ENCODE measurements at regions of chr12 and their contacts with region 1.

Region 1: DNA sequence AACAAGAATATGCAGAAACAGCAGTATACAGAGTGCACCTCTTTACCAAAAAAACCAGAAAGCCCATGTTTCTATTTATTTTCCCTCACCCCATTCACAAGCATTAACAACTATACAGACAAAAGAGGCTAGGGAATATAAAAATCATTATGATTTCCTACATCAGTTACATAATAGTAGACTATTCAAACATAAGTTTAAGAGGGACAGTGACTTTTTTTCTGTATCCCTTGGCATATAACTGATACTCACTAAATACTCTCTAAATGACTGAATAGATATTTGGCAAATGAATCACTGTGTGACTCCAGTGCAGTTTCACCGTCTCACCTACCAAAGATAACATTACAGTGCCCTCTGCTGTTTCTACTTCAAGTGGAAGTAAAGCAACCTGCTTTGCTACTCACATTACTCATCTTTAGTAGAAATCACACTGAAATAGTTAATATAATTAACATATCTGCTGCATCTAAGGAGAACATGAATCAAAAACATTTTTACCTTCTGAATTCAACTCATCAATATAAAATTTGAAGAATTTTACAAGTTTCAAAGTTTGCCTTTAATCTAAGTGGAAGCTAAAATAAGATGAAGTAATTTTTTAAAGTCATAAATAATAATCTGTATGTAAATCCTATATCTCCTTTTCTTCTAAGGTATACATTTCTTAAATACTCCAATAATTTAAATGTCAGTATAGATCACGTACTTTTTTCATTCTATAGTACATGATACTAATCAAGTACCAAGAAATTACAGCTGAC is 103.8 kb downstream of the OSBPL8 start:
- DNase-seq: peak; percentile 95
- ATAC-seq: peak; percentile 89
- H3K4me3 ChIP-seq: 0 out of 2 replicates have a peak overlapping the region, but pooled peaks have one; percentile 19
- H3K27ac ChIP-seq: peak overlapping the region; percentile 52
- H3K4me1 ChIP-seq: peaks cover 31% of the 10 kb centered on the region
- H3K27me3 ChIP-seq: no peaks in the 10 kb centered on the region
- CTCF ChIP-seq: peak; percentile 90

Region 2: GRCh38 chr12:75526655-75527511 is 928.9 kb before region 1 on chr12:
- CTCF ChIA-PET with region 1: no interaction called
- POLR2A ChIA-PET with region 1: no interaction called
- intact Hi-C with region 1: loop called (anchors 5 kb)
- DNase-seq: peak; percentile 75
- ATAC-seq: peak; percentile 76
- H3K4me3 ChIP-seq: no peak overlapping the region
- H3K27ac ChIP-seq: no peak overlapping the region
- H3K4me1 ChIP-seq: no peaks in the 10 kb centered on the region; the same call in 1 of the 2 replicates
- H3K27me3 ChIP-seq: no peaks in the 10 kb centered on the region
- CTCF ChIP-seq: peak; percentile 87

Region 3: GRCh38 chr12:76031537-76032073 is 424.2 kb before region 1 on chr12 and contains the start of gene PHLDA1:
- CTCF ChIA-PET with region 1: no interaction called
- POLR2A ChIA-PET with region 1: interaction called, 9 read pairs
- intact Hi-C with region 1: loop called (anchors 1 kb)
- DNase-seq: peak; percentile 98
- ATAC-seq: peak; percentile 75
- H3K4me3 ChIP-seq: peak within 1 kb of the TSS; percentile 97
- H3K27ac ChIP-seq: peak within 1 kb of the TSS; percentile 94
- H3K4me1 ChIP-seq: peaks cover 34% of the 10 kb centered on the region
- H3K27me3 ChIP-seq: no peaks in the 10 kb centered on the region
- CTCF ChIP-seq: peak; percentile 34; the same call in 1 of the 2 replicates
- total RNA-seq, gene PHLDA1: 181 and 218 TPM in 2 replicates

Region 4: DNA sequence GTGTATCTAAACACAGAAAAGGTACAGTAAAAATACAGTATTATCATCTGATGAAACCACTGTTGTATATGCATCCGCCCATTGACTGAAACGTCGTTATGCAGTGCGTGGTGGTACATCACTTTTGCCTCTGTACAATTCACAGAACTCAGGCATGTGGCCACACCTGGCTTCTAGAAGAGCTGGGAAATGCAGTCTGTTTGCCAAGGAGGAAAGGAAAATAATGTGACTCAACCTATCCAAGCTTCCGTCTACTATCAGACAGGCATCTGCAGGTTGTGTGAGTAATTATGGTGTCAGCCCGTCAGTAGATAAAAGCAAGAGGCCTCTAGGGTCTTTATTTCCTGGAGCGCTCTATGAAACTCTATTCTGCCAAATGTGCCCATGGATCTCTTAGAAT is 219.2 kb before region 1 on chr12:
- CTCF ChIA-PET with region 1: no interaction called
- POLR2A ChIA-PET with region 1: no interaction called
- intact Hi-C with region 1: loop called (anchors 5 kb)
- DNase-seq: peak; percentile 97
- ATAC-seq: peak; percentile 93
- H3K4me3 ChIP-seq: peak overlapping the region; percentile 21; the same call in 1 of the 2 replicates
- H3K27ac ChIP-seq: peak overlapping the region; percentile 86
- H3K4me1 ChIP-seq: peaks cover 35% of the 10 kb centered on the region
- H3K27me3 ChIP-seq: no peaks in the 10 kb centered on the region
- CTCF ChIP-seq: no peak

Region 5: GRCh38 chr12:76374386-76375020 is 81.3 kb before region 1 on chr12:
- CTCF ChIA-PET with region 1: interaction called, 3 read pairs
- POLR2A ChIA-PET with region 1: no interaction called
- intact Hi-C with region 1: loop called (anchors 5 kb)
- DNase-seq: peak; percentile 57
- ATAC-seq: 0 out of 2 replicates have a peak, but pooled peaks have one; percentile 11
- H3K4me3 ChIP-seq: 0 out of 2 replicates have a peak overlapping the region, but pooled peaks have one; percentile 42
- H3K27ac ChIP-seq: peak overlapping the region; percentile 88
- H3K4me1 ChIP-seq: peaks cover 49% of the 10 kb centered on the region
- H3K27me3 ChIP-seq: no peaks in the 10 kb centered on the region
- CTCF ChIP-seq: no peak

Region 6: GRCh38 chr12:76495556-76495955 is 39.8 kb after region 1 on chr12:
- CTCF ChIA-PET with region 1: no interaction called
- POLR2A ChIA-PET with region 1: no interaction called
- intact Hi-C with region 1: no loop called
- DNase-seq: no peak
- ATAC-seq: no peak
- H3K4me3 ChIP-seq: no peak overlapping the region
- H3K27ac ChIP-seq: no peak overlapping the region
- H3K4me1 ChIP-seq: no peaks in the 10 kb centered on the region
- H3K27me3 ChIP-seq: no peaks in the 10 kb centered on the region
- CTCF ChIP-seq: no peak

Region 7: DNA sequence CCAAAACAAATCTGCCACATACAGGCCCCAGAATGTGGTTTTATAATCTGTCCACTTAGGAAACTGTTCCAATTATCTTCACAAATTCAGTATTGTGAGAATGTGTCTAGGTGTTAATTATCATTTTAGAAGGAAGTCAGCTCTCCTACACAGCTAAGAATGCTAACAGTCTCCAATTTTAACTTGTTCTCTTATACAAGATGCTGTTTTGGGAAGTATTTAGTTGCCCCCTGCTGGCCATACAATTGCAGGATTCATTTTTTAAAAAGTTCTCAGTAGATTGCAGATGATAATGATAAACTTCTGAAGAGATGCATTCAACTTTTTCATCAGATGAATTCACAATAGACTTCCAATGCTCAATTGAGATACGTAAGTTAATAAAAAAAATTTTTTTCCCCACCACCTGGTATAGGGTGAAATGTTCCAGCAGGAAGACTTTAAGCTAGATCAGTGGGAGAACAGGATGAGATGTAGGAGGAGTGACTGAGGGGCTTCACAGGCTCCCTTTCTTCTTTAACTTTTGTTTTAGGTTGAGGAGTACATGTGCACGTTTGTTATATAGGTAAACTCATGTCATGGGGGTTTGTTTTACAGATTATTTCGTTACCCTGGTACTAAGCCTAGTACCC is 131.1 kb after region 1 on chr12:
- CTCF ChIA-PET with region 1: interaction called, 4 read pairs
- POLR2A ChIA-PET with region 1: no interaction called
- intact Hi-C with region 1: loop called (anchors 2 kb)
- DNase-seq: peak; percentile 60
- ATAC-seq: peak; percentile 43
- H3K4me3 ChIP-seq: no peak overlapping the region
- H3K27ac ChIP-seq: no peak overlapping the region
- H3K4me1 ChIP-seq: peaks cover 6% of the 10 kb centered on the region
- H3K27me3 ChIP-seq: no peaks in the 10 kb centered on the region
- CTCF ChIP-seq: peak; percentile 89